ENCODE measurements at regions of chr12 and their contacts with region 1.

Region 1: GRCh38 chr12:104286538-104287482 is 16.7 kb upstream of the EID3 start:
- H3K4me3 ChIP-seq: peak overlapping the region; percentile 79
- H3K27ac ChIP-seq: peak overlapping the region; percentile 86
- H3K4me1 ChIP-seq: peaks cover 7% of the 10 kb centered on the region; the same call in 1 of the 2 replicates
- CTCF ChIP-seq: peak; percentile 20; the same call in 1 of the 2 replicates

Region 2: GRCh38 chr12:104137913-104138796 is 148.7 kb before region 1 on chr12 and contains the start of gene NFYB:
- CTCF ChIA-PET with region 1: no interaction called
- POLR2A ChIA-PET with region 1: interaction called, 10 read pairs
- H3K4me3 ChIP-seq: peak within 1 kb of the TSS; percentile 88
- H3K27ac ChIP-seq: peak within 1 kb of the TSS; percentile 97
- H3K4me1 ChIP-seq: peaks cover 5% of the 10 kb centered on the region; the same call in 1 of the 2 replicates
- CTCF ChIP-seq: no peak

Region 3: GRCh38 chr12:104219908-104220530 is 66.8 kb before region 1 on chr12:
- CTCF ChIA-PET with region 1: interaction called, 4 read pairs
- POLR2A ChIA-PET with region 1: interaction called, 59 read pairs
- H3K4me3 ChIP-seq: no peak overlapping the region; the same call in 1 of the 2 replicates
- H3K27ac ChIP-seq: peak overlapping the region; percentile 76
- H3K4me1 ChIP-seq: peaks cover 2% of the 10 kb centered on the region
- CTCF ChIP-seq: no peak

Region 4: GRCh38 chr12:104314242-104314614 is 27.4 kb after region 1 on chr12:
- CTCF ChIA-PET with region 1: no interaction called
- POLR2A ChIA-PET with region 1: no interaction called
- H3K4me3 ChIP-seq: no peak overlapping the region
- H3K27ac ChIP-seq: no peak overlapping the region
- H3K4me1 ChIP-seq: no peaks in the 10 kb centered on the region
- CTCF ChIP-seq: no peak